Dendritic cell treated with granulocyte-macrophage colony-stimulating factor and Interleukin-4, amounts not matched to agents 40 ng/mL and 50 ng/mL, for 4 days (primary cell): ENCODE measurements at regions of chr15 and their contacts with region 1.

Region 1: GRCh38 chr15:32130823-32131222 is 100.5 kb downstream of the CHRNA7 start:
- H3K4me3 Mint-ChIP-seq: no peak overlapping the region
- H3K27ac Mint-ChIP-seq: no peak overlapping the region
- H3K4me1 Mint-ChIP-seq: no peaks in the 10 kb centered on the region
- H3K27me3 Mint-ChIP-seq: peaks cover 1% of the 10 kb centered on the region

Region 2: GRCh38 chr15:32067115-32067514 is 63.7 kb before region 1 on chr15:
- intact Hi-C with region 1: loop called (anchors 10 kb)
- H3K4me3 Mint-ChIP-seq: no peak overlapping the region
- H3K27ac Mint-ChIP-seq: no peak overlapping the region
- H3K4me1 Mint-ChIP-seq: no peaks in the 10 kb centered on the region
- H3K27me3 Mint-ChIP-seq: no peaks in the 10 kb centered on the region